Mammary epithelial cell (primary cell): ENCODE measurements at regions of chr21 and their contacts with region 1.

Region 1: DNA sequence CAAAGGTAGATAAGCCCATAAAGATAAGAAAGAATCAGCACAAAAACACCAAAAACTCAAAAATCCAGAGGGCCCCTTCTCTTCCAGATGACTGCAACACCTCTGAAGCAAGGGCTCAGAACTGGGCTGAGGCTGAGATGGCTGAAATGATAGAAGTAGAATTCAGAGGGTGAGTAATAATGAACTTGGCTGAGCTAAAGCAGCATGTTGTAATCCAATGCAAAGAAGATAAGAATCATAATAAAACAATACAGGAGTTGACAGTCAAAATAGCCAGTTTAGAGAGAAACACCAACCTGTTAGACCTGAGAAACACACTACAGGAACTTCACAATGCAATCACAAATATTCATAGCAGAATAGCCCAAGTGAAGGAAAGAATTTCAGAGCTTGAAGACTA is 406.9 kb upstream of the CXADR start:
- DNase-seq: peak; percentile 11
- H3K4me3 ChIP-seq: no peak overlapping the region
- H3K27ac ChIP-seq: no peak overlapping the region
- H3K4me1 ChIP-seq: no peaks in the 10 kb centered on the region
- H3K27me3 ChIP-seq: no peaks in the 10 kb centered on the region
- CTCF ChIP-seq: no peak

Region 2: DNA sequence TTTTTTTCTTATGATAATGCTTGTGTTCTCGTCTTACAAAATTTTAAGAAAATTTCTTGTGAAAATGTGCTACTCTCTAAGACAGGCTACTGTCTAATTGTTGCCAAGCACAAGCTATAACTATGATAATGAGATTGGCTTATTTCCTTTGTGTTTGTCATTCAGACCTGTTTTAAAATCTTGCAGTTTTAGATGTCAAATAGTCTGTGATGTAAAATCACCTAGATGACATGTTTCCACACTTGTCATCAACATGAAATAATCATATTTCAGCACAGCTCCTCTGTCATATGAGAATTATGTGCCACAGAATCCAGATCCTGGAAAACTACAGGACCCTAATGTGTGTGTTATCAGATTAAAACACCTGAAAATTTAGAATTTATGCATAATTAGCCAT is 836.5 kb before region 1 on chr21:
- CTCF ChIA-PET with region 1: no interaction called
- dilution Hi-C with region 1: no loop called
- in situ Hi-C with region 1: no loop called
- intact Hi-C with region 1: no loop called
- DNase-seq: no peak
- H3K4me3 ChIP-seq: no peak overlapping the region
- H3K27ac ChIP-seq: no peak overlapping the region
- H3K4me1 ChIP-seq: no peaks in the 10 kb centered on the region
- H3K27me3 ChIP-seq: no peaks in the 10 kb centered on the region
- CTCF ChIP-seq: no peak

Region 3: GRCh38 chr21:17071093-17071492 is 34.9 kb before region 1 on chr21:
- CTCF ChIA-PET with region 1: no interaction called
- dilution Hi-C with region 1: loop called (anchors 5 kb)
- in situ Hi-C with region 1: no loop called
- intact Hi-C with region 1: no loop called
- DNase-seq: peak; percentile 25
- H3K4me3 ChIP-seq: no peak overlapping the region
- H3K27ac ChIP-seq: no peak overlapping the region
- H3K4me1 ChIP-seq: no peaks in the 10 kb centered on the region
- H3K27me3 ChIP-seq: no peaks in the 10 kb centered on the region
- CTCF ChIP-seq: no peak

Region 4: GRCh38 chr21:17139720-17140119 is 33.8 kb after region 1 on chr21:
- CTCF ChIA-PET with region 1: no interaction called
- dilution Hi-C with region 1: no loop called
- in situ Hi-C with region 1: no loop called
- intact Hi-C with region 1: no loop called
- DNase-seq: peak; percentile 12
- H3K4me3 ChIP-seq: peak overlapping the region in 2 of 3 experiments; percentile 24 to 34
- H3K27ac ChIP-seq: no peak overlapping the region
- H3K4me1 ChIP-seq: no peaks in the 10 kb centered on the region
- H3K27me3 ChIP-seq: peaks cover 2% of the 10 kb centered on the region
- CTCF ChIP-seq: no peak